ENCODE measurements at regions of chr15 and their contacts with region 1.

Region 1: GRCh38 chr15:49235446-49236124 is 65.5 kb downstream of the GALK2 start:
- DNase-seq: peak in 1 of 3 donors; percentile 54
- ATAC-seq: peak; percentile 77
- H3K4me3 ChIP-seq: no peak overlapping the region
- H3K4me1 ChIP-seq: no peaks in the 10 kb centered on the region
- CTCF ChIP-seq: peak; percentile 32

Region 2: DNA sequence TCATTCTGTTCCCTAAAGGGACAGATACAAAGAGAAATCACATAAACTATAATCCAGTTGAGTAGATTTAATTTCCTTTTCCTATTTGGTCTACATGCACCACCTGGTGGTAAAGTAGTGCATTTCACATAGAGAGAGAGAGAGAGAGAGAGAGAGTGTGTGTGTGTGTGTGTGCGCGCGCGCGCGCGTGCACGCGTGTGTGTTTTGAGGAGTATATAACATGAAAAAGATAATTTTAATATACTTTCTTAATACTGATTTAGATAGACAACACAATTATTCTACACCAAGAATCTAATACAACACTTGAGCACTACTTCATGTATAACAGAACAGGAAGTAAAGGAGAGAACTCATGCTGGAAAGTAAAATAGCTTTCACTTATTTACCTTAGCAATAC is 186.4 kb after region 1 on chr15:
- intact Hi-C with region 1: loop called (anchors 5 to 10 kb)
- DNase-seq: peak in 2 of 3 donors; percentile 31 to 78
- ATAC-seq: peak; percentile 85
- H3K4me3 ChIP-seq: no peak overlapping the region
- H3K4me1 ChIP-seq: no peaks in the 10 kb centered on the region
- CTCF ChIP-seq: peak; percentile 31

Region 3: DNA sequence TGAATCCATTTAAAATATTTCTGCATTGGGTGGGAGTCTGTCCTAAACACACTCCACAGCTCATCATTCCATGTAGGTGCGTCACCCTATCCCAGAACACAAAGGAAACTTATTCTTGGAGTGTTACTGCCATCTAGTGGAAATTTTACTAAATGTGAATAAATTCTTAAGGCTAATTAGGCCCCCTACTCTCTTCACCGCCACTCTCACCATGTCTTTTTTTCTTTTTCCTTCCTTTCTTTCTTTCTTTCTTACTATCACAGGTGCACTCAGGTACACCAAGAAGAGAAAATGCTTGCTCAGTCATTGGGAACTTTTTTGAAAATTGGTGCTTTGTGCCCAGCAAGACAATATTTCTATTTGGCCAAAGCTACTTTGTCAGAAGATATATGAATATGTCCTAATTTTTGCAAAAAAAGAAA is 909.9 kb after region 1 on chr15:
- intact Hi-C with region 1: loop called in 1 of 2 experiments (anchors 10 kb)
- DNase-seq: peak in 1 of 3 donors; percentile 24
- ATAC-seq: peak; percentile 55
- H3K4me3 ChIP-seq: no peak overlapping the region
- H3K4me1 ChIP-seq: no peaks in the 10 kb centered on the region
- CTCF ChIP-seq: no peak

Measured in mucosa of descending colon (tissue), 3 donors.